ENCODE measurements at regions of chr11 and their contacts with region 1.

Region 1: GRCh38 chr11:70467201-70468085 is 69.1 kb downstream of the CTTN start:
- DNase-seq: peak; percentile 81
- H3K4me3 Mint-ChIP-seq: no peak overlapping the region
- H3K27ac Mint-ChIP-seq: no peak overlapping the region
- H3K4me1 Mint-ChIP-seq: peaks cover 8% of the 10 kb centered on the region
- H3K27me3 Mint-ChIP-seq: no peaks in the 10 kb centered on the region
- CTCF ChIP-seq: peak; percentile 75

Region 2: DNA sequence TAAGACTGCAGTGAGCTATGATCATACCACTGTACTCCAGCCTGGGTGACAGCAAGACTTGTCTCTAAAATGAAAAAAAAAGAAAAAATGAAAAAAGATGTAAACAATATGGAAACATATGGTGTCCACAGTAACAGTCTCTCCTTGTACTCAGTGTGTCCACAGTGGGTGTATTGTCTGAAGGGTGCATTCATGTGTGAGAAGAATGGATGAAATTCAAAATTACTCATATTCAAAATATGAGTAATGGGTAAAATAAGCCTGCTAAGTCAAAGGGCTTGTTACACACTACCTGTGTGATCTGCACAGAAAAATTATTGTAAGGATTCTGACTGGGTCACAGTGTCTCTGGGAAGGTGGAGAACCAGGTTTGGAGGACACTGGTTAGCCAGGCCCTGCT is 170.1 kb before region 1 on chr11:
- CTCF ChIA-PET with region 1: no interaction called
- intact Hi-C with region 1: no loop called
- DNase-seq: no peak
- H3K4me3 Mint-ChIP-seq: no peak overlapping the region
- H3K27ac Mint-ChIP-seq: no peak overlapping the region
- H3K4me1 Mint-ChIP-seq: peaks cover 8% of the 10 kb centered on the region
- H3K27me3 Mint-ChIP-seq: no peaks in the 10 kb centered on the region
- CTCF ChIP-seq: no peak

Region 3: GRCh38 chr11:70483077-70483861 is 15.8 kb after region 1 on chr11:
- CTCF ChIA-PET with region 1: interaction called, 11 read pairs
- intact Hi-C with region 1: no loop called
- DNase-seq: peak; percentile 68
- H3K4me3 Mint-ChIP-seq: peak overlapping the region; percentile 19
- H3K27ac Mint-ChIP-seq: no peak overlapping the region
- H3K4me1 Mint-ChIP-seq: peaks cover 16% of the 10 kb centered on the region
- H3K27me3 Mint-ChIP-seq: no peaks in the 10 kb centered on the region
- CTCF ChIP-seq: peak; percentile 60

Region 4: DNA sequence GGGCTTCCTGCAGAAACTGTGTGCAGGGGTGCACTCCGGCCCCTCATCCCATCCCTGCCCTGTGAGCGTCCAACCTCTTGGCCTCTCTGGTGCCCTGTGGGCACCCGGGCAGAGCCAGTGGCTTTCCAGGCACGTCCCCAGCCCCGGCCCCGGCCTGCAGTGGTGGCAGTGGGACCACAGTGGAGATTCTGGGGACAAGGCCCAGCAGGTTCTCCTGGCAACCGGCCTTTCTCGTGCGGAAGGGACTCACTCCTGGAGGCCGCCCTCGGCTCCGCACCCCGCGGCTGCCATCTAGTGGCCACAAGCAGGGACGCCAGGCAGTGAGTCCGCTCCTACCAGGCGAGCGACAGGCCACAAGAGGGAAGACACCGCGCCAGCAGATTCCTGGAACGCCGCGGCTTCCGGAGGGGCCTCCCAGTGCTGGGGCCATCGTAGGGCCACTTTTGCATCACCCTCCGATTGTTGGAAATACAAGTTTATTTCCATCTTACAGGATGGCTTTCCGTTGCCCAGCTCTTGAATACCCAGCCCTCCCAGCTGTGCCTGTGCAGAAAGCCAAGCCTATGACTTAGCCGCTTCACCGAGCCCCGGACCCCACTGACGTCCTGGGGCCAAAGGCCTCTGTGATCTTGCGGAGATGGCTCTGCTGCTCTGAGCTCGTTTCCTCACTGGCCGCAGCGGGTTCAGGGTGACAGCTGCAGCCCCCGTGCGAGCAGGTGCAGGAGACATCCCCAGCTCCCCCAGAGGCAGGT is 288.1 kb after region 1 on chr11:
- CTCF ChIA-PET with region 1: interaction called, 4 read pairs
- intact Hi-C with region 1: loop called (anchors 1 kb)
- DNase-seq: peak; percentile 83
- H3K4me3 Mint-ChIP-seq: no peak overlapping the region
- H3K27ac Mint-ChIP-seq: no peak overlapping the region
- H3K4me1 Mint-ChIP-seq: peaks cover 8% of the 10 kb centered on the region
- H3K27me3 Mint-ChIP-seq: no peaks in the 10 kb centered on the region
- CTCF ChIP-seq: peak; percentile 92

Measured in Calu3 (cell line).